PC-9 (cell line): ENCODE measurements at regions of chr20 and their contacts with region 1.

Region 1: GRCh38 chr20:45771182-45771759 is 20.4 kb downstream of the WFDC3 start:
- DNase-seq: peak; percentile 74 to 84
- H3K4me3 ChIP-seq: no peak overlapping the region
- H3K27ac ChIP-seq: no peak overlapping the region
- H3K4me1 ChIP-seq: peaks cover 6% of the 10 kb centered on the region
- H3K27me3 ChIP-seq: no peaks in the 10 kb centered on the region
- CTCF ChIP-seq: peak; percentile 98

Region 2: GRCh38 chr20:45362804-45363610 is 408.3 kb before region 1 on chr20 and contains the start of gene SYS1:
- CTCF ChIA-PET with region 1: interaction called, 3 read pairs
- POLR2A ChIA-PET with region 1: interaction called, 5 read pairs
- intact Hi-C with region 1: loop called (anchors 1 kb)
- DNase-seq: peak; percentile 97 to 99
- H3K4me3 ChIP-seq: peak within 1 kb of the TSS; percentile 83
- H3K27ac ChIP-seq: peak within 1 kb of the TSS; percentile 76
- H3K4me1 ChIP-seq: peaks cover 29% of the 10 kb centered on the region
- H3K27me3 ChIP-seq: no peaks in the 10 kb centered on the region
- CTCF ChIP-seq: peak; percentile 92
- total RNA-seq, gene SYS1: 35.1 and 38.8 TPM in 2 replicates

Region 3: GRCh38 chr20:45373353-45374100 is 397.7 kb before region 1 on chr20:
- CTCF ChIA-PET with region 1: interaction called, 8 read pairs
- POLR2A ChIA-PET with region 1: no interaction called
- intact Hi-C with region 1: loop called (anchors 2 kb)
- DNase-seq: peak; percentile 57 to 87
- H3K4me3 ChIP-seq: no peak overlapping the region
- H3K27ac ChIP-seq: no peak overlapping the region
- H3K4me1 ChIP-seq: no peaks in the 10 kb centered on the region
- H3K27me3 ChIP-seq: no peaks in the 10 kb centered on the region
- CTCF ChIP-seq: peak; percentile 76

Region 4: DNA sequence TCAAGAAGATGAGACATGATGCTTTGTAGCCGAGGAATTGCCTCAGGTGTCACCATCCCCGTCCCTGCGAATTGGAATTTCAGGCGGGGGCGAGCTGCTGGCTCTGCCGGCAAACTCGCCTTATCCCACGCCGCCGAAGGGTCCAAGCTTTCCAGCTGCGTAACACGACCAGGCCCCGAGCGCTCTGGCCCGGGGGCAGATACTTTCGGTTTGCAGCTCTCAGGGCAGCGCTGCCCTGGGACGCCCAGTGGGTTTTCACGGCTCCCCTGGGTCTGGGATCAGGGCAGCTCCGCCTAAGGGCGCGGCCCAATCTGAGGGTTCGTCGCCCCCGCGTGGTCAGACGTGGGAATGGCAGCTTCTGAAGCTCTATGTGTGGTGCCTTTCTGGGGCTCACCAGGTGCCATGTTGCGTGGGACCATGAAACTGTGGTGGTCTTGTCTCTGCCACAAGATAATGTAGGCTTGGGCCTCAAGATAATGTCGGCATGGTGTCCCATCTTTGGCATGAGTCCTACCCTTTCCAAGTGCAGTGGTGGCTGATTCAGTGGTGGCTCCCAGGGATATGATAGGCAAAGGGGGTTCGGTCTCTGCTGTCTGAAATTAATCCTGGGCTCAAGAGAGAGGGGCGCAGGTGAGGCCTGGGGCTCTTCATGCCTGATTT is 334.4 kb before region 1 on chr20:
- CTCF ChIA-PET with region 1: interaction called, 24 read pairs
- POLR2A ChIA-PET with region 1: no interaction called
- intact Hi-C with region 1: no loop called
- DNase-seq: peak; percentile 70 to 89
- H3K4me3 ChIP-seq: peak overlapping the region; percentile 78
- H3K27ac ChIP-seq: no peak overlapping the region
- H3K4me1 ChIP-seq: peaks cover 14% of the 10 kb centered on the region
- H3K27me3 ChIP-seq: no peaks in the 10 kb centered on the region
- CTCF ChIP-seq: peak; percentile 98

Region 5: DNA sequence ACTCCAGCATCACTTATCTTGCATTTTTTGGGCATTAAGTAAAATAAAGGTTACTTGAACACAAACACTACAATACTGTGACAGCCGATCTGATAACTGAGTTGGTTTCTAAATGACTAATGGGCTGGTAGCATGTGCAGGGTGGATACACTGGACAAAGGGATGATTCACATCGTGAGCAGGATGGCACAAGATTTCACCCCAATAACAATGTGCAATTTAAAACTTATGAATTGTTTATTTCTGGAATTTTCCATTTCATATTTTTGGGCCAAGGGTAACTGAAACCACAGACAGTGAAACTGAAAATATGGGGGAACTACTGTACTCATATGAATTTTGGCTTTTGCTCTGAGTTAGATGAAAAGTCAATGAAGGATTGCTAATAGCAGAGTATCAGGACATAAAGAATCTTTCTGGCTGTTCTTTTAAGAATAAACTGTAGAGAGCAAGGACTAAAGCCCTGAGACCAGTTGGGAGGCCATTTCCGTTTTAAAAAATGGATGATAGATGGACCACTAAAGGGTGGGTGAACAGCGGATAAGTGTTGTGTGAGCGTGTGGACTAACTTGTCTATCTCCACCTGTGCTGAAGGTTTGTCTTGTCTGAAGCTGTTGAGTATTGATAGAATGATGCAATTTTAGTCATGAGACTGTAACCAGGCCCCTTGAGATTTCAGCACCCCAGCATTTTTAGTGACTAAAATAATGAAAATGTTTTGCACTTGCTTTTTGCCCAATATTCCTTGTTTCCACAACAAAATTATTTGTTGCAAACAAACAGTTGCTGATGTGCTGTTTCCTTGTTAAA is 264.1 kb before region 1 on chr20:
- CTCF ChIA-PET with region 1: interaction called, 26 read pairs
- POLR2A ChIA-PET with region 1: no interaction called
- intact Hi-C with region 1: no loop called
- DNase-seq: peak in 1 of 2 experiments; percentile 86
- H3K4me3 ChIP-seq: peak overlapping the region; percentile 7; the same call in 1 of the 2 replicates
- H3K27ac ChIP-seq: peak overlapping the region; percentile 95
- H3K4me1 ChIP-seq: peaks cover 45% of the 10 kb centered on the region
- H3K27me3 ChIP-seq: no peaks in the 10 kb centered on the region
- CTCF ChIP-seq: no peak

Region 6: GRCh38 chr20:45545754-45546453 is 225.4 kb before region 1 on chr20:
- CTCF ChIA-PET with region 1: interaction called, 4 read pairs
- POLR2A ChIA-PET with region 1: no interaction called
- intact Hi-C with region 1: loop called (anchors 1 kb)
- DNase-seq: no peak
- H3K4me3 ChIP-seq: no peak overlapping the region
- H3K27ac ChIP-seq: no peak overlapping the region
- H3K4me1 ChIP-seq: peaks cover 10% of the 10 kb centered on the region
- H3K27me3 ChIP-seq: no peaks in the 10 kb centered on the region
- CTCF ChIP-seq: peak; percentile 64

Region 7: GRCh38 chr20:45592574-45593189 is 178.6 kb before region 1 on chr20:
- CTCF ChIA-PET with region 1: interaction called, 4 read pairs
- POLR2A ChIA-PET with region 1: no interaction called
- intact Hi-C with region 1: loop called (anchors 1 kb)
- DNase-seq: peak; percentile 28 to 70
- H3K4me3 ChIP-seq: no peak overlapping the region
- H3K27ac ChIP-seq: no peak overlapping the region
- H3K4me1 ChIP-seq: no peaks in the 10 kb centered on the region
- H3K27me3 ChIP-seq: peaks cover 7% of the 10 kb centered on the region; the same call in 1 of the 2 replicates
- CTCF ChIP-seq: peak; percentile 86